PC-9 (cell line): ENCODE measurements at regions of chr7 and their contacts with region 1.

Region 1: GRCh38 chr7:129952653-129953560 is at the start of gene UBE2H:
- DNase-seq: peak; percentile 68 to 89
- H3K4me3 ChIP-seq: peak within 1 kb of the TSS; percentile 76
- H3K27ac ChIP-seq: peak within 1 kb of the TSS; percentile 100
- H3K4me1 ChIP-seq: peaks cover 42% of the 10 kb centered on the region
- H3K27me3 ChIP-seq: no peaks in the 10 kb centered on the region
- CTCF ChIP-seq: no peak
- total RNA-seq, gene UBE2H: 211 TPM in 2 replicates

Region 2: DNA sequence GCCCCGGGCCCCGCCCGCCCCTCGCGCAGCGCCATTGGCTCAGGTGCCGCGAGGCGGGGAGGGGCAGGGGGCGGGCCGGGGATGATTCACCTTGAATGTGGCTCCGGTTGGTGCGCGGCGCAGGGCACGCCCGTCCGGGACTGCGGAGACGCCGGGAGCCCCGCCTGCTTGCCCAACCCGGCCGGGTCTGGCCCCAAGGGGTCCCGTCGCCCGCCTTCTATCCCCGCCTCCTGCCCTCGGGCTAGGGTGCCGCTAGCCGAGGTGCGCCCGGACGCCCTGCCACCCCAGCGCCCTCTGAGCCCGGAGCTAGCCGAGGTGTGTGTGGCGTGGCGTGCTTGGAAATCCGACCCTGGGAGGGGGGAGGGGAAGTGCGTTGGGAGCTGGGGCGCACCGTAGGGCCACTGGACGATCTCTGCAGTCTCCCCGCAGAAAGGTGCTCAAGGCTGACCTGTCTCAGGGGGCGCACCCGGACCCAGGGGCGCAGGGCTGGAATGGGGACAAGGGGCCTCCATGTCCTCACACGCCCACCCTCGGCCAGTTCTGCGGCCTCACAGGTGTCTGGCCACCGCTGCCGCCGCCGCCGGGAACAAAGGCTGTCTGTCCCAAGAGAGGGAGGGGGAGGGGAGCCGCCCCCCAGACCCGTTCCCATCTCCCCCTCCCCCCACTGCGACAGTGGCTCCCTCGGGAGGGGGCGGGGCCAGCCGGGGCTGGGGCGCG is 172.5 kb before region 1 on chr7:
- CTCF ChIA-PET with region 1: no interaction called
- POLR2A ChIA-PET with region 1: no interaction called
- intact Hi-C with region 1: loop called (anchors 5 kb)
- DNase-seq: peak; percentile 84 to 98
- H3K4me3 ChIP-seq: peak overlapping the region; percentile 85
- H3K27ac ChIP-seq: peak overlapping the region; percentile 21
- H3K4me1 ChIP-seq: peaks cover 17% of the 10 kb centered on the region
- H3K27me3 ChIP-seq: no peaks in the 10 kb centered on the region
- CTCF ChIP-seq: no peak

Region 3: GRCh38 chr7:129845178-129845971 is 107.5 kb before region 1 on chr7:
- CTCF ChIA-PET with region 1: interaction called, 5 read pairs
- POLR2A ChIA-PET with region 1: interaction called, 4 read pairs
- intact Hi-C with region 1: loop called (anchors 5 kb)
- DNase-seq: peak; percentile 55 to 69
- H3K4me3 ChIP-seq: no peak overlapping the region
- H3K27ac ChIP-seq: peak overlapping the region; percentile 88
- H3K4me1 ChIP-seq: peaks cover 46% of the 10 kb centered on the region
- H3K27me3 ChIP-seq: no peaks in the 10 kb centered on the region
- CTCF ChIP-seq: no peak

Region 4: GRCh38 chr7:129969807-129970446 is 17.0 kb after region 1 on chr7:
- CTCF ChIA-PET with region 1: interaction called, 15 read pairs
- POLR2A ChIA-PET with region 1: interaction called, 52 read pairs
- intact Hi-C with region 1: loop called (anchors 1 kb)
- DNase-seq: peak; percentile 97 to 99
- H3K4me3 ChIP-seq: peak overlapping the region; percentile 22; the same call in 1 of the 2 replicates
- H3K27ac ChIP-seq: peak overlapping the region; percentile 99
- H3K4me1 ChIP-seq: peaks cover 47% of the 10 kb centered on the region
- H3K27me3 ChIP-seq: no peaks in the 10 kb centered on the region
- CTCF ChIP-seq: no peak

Region 5: GRCh38 chr7:129989466-129989865 is 36.6 kb after region 1 on chr7:
- CTCF ChIA-PET with region 1: interaction called, 3 read pairs
- POLR2A ChIA-PET with region 1: interaction called, 3 read pairs
- intact Hi-C with region 1: loop called (anchors 2 kb)
- DNase-seq: peak; percentile 65 to 94
- H3K4me3 ChIP-seq: no peak overlapping the region
- H3K27ac ChIP-seq: peak overlapping the region; percentile 70
- H3K4me1 ChIP-seq: peaks cover 39% of the 10 kb centered on the region
- H3K27me3 ChIP-seq: no peaks in the 10 kb centered on the region
- CTCF ChIP-seq: no peak